Activated CD8-positive, alpha-beta T cell treated with anti-CD3 and anti-CD28 coated beads for 36 hours (primary cell): ENCODE measurements at regions of chr10 and their contacts with region 1.

Region 1: GRCh38 chr10:12656518-12657142 is 307.3 kb downstream of the CAMK1D start:
- DNase-seq: no peak
- ATAC-seq: peak; percentile 86
- H3K4me3 Mint-ChIP-seq: no peak overlapping the region
- H3K27ac Mint-ChIP-seq: no peak overlapping the region
- H3K4me1 Mint-ChIP-seq: peaks cover 23% of the 10 kb centered on the region
- H3K27me3 Mint-ChIP-seq: no peaks in the 10 kb centered on the region
- CTCF ChIP-seq: peak; percentile 86

Region 2: DNA sequence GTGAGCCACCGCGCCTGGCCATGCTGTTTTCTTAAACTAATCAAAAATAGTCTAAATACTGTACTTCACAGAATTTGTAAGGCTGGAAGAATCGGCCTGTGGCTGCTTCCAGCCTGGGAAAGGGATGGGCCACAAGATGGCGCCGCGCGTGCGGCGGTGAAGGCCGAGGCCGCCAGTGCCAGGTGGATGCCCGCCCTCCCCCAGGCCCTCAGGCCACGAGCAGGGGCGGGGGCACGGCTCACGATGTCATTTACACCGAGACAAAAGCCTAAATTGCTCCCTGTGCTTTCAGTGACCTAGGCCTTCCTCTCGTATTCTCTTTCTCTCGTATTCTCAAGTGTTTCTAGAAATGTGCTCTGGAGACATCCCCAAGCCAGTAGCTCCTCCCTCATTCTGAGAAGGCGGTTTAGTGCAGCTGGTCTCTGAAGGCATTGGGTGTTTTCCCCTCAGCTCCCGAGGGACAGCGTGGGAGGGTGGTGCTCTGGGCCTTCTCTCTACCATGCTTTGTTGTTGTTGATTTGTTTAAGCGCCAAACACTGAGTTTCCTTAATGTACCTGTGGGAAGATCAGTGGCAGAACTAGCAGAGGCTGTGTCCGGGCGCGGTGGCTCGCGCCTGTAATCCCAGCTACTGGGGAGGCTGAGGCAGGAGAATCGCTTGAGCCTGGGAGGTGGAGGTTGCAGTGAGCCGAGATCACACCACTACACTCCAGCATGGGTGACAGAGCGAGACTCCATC is 392.3 kb before region 1 on chr10:
- CTCF ChIA-PET with region 1: interaction called, 38 read pairs
- POLR2A ChIA-PET with region 1: no interaction called
- intact Hi-C with region 1: loop called (anchors 5 kb)
- DNase-seq: peak; percentile 89
- ATAC-seq: peak; percentile 92
- H3K4me3 Mint-ChIP-seq: peak overlapping the region; percentile 30
- H3K27ac Mint-ChIP-seq: peak overlapping the region; percentile 85
- H3K4me1 Mint-ChIP-seq: peaks cover 24% of the 10 kb centered on the region
- H3K27me3 Mint-ChIP-seq: no peaks in the 10 kb centered on the region
- CTCF ChIP-seq: peak; percentile 73

Region 3: DNA sequence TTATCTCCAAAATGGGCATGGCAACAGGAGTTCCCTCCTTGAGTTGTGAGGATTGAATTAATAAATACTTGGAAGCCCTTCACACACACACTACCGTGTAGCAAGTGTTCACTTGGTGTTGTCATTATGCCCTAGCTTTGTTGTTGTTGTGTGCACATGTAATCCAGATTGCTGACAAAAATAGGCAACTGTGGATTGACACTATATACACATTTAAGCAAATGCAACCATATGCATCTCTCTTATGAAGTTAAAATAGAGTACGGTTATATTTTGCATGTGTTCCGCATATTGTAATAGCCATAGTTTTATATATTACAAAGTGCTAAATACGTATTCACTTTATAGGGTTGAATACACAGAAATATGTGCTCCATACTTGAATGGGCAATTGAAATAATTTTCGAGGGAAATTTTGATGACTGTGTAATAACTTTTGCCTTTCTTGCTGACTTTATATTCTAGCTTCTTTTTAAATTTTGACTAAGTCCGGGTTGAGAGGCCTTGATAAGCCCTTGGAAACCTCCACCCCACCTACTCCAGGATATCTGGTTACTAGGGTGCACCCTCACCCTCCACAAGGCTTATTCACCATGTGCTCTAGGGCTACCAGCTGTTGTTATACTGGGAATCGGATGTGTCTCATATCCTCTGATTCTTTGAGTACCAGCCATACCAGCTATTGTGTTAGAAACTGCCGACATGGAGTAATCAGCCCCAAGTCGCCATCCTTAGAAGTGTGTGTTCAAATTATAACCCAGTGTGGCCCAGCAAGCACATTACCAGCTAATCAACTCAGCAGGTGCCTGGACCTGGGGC is 42.2 kb before region 1 on chr10:
- CTCF ChIA-PET with region 1: no interaction called
- POLR2A ChIA-PET with region 1: no interaction called
- intact Hi-C with region 1: no loop called
- DNase-seq: no peak
- ATAC-seq: no peak
- H3K4me3 Mint-ChIP-seq: no peak overlapping the region
- H3K27ac Mint-ChIP-seq: no peak overlapping the region
- H3K4me1 Mint-ChIP-seq: no peaks in the 10 kb centered on the region
- H3K27me3 Mint-ChIP-seq: no peaks in the 10 kb centered on the region
- CTCF ChIP-seq: no peak

Region 4: DNA sequence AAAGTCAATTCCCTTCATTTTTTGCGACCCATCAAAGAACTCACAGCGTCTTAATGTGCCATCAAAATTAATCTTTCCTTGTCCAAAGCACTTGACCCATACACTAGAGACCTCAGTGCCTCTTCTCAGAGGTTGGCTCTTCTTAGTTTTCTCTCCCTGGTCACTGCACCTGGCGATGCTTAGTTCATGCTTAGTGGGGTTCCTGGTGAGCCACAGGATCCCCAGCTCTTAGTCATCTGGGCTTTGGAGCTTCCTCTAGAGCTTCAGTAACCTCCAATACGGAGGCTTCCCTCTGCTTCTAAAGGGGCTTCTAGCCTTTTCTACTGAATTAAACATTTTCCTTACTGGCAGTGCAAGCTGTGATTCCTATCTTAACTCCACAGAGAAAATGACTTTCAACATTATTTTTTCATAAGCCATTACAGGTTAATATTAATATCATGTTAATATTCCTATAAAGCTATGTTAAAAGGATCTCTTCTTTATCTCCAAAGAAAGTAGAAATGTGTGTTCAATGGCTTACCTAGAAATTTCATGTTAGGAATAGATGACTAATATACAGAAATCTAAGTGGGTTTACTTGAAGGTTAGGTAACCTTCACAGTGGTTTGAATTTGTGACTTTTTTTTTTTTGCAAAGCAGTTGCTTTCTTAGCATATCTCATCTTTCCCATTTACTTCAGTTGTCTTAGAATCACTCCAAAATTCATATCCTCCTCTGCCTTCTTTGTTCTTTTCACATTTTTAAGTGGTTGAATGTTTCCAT is 12.1 kb before region 1 on chr10:
- CTCF ChIA-PET with region 1: interaction called, 24 read pairs
- POLR2A ChIA-PET with region 1: interaction called, 6 read pairs
- intact Hi-C with region 1: no loop called
- DNase-seq: peak; percentile 50
- ATAC-seq: peak; percentile 78
- H3K4me3 Mint-ChIP-seq: peak overlapping the region; percentile 1
- H3K27ac Mint-ChIP-seq: peak overlapping the region; percentile 68
- H3K4me1 Mint-ChIP-seq: peaks cover 21% of the 10 kb centered on the region
- H3K27me3 Mint-ChIP-seq: no peaks in the 10 kb centered on the region
- CTCF ChIP-seq: no peak